ENCODE measurements at regions of chr2 and their contacts with region 1.

Region 1: DNA sequence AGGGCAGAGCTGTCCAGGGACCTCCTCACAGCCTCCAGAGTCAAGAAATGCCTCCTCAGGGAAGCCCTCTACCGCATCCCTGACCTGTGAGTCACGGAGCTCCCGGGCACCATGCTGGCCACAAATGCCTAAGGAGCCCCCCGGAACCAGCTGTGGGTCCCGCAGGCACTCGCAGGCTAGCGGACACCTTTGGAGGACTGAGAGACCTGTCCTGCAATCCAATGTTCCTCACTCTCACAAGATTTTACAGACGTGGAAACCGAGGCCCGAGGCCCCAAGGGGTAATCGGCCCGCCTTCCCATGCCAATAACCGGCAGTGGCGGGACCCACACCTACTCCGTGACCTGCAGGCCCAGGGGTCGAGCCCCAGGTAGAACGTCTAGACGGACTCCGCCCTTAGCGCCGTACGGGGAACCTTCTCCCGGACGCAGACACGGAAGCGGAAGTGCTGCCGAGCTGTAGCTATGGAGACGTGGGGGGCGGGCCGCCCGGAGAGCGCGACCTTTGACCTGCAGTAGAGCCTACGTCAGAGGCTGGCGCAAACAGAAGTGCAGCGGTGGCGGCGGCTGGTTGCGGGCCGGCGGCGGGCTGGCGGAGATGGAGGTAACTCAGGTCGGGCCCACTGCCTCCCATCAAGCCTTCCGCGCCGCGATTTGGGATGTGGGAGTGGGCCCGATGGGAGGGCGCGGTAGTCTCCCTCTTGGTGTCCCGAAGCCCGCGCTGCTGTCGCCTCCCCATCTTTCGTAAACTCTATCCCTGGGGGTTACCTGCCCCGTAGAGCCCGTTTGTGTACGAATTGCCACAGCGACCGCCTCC is at the start of gene GCC2:
- DNase-seq: peak; percentile 97
- H3K4me3 Mint-ChIP-seq: peak within 1 kb of the TSS; percentile 96
- H3K27ac Mint-ChIP-seq: peak within 1 kb of the TSS; percentile 97
- H3K4me1 Mint-ChIP-seq: peaks cover 38% of the 10 kb centered on the region
- H3K27me3 Mint-ChIP-seq: no peaks in the 10 kb centered on the region
- total RNA-seq, gene GCC2: 43.6 to 47.3 TPM

Region 2: GRCh38 chr2:108492364-108492763 is 43.5 kb after region 1 on chr2:
- CTCF ChIA-PET with region 1: no interaction called
- POLR2A ChIA-PET with region 1: interaction called, 3 read pairs
- intact Hi-C with region 1: loop called (anchors 5 kb)
- DNase-seq: no peak
- H3K4me3 Mint-ChIP-seq: no peak overlapping the region
- H3K27ac Mint-ChIP-seq: peak overlapping the region; percentile 68
- H3K4me1 Mint-ChIP-seq: peaks cover 17% of the 10 kb centered on the region
- H3K27me3 Mint-ChIP-seq: no peaks in the 10 kb centered on the region

Region 3: DNA sequence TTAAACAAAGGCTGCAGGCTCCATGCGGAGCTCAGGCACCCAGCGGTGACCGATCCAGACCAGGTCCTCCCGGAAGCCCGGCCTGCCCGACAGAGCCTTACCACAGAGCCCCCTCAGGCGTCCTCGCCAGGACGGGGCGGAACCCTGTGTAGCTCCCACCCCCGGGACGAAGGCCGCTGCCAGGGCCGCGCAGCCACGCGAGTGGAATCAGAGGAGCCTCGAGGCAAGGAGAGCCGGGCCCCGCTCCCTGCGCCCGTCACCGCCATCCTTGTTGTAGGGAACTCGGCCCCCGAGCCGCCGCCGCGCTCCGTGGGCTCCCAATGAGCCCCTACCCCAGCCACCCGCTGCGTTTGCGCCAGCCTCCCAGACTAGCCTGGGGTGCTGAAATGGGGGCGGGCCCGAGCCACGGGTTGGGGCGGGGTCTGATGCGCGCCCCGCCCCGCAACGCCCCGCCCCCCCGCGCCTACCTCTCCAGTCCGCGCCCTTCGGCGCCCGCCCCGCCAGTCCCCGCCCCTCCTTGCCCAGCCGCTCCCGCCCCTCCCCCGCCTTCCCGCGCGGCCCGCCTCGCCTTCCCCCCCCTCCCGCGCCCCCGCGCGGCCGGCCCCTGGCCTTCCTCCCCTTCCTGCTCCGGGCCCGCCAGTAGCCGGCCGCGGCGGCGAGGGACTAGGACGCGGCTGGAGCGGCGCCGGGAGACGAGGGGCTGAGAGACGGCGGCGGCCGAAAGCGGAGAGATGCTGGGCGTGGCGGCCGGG is 85.1 kb after region 1 on chr2 and contains the start of gene LIMS1:
- CTCF ChIA-PET with region 1: no interaction called
- POLR2A ChIA-PET with region 1: interaction called, 19 read pairs
- intact Hi-C with region 1: loop called (anchors 1 kb)
- DNase-seq: peak; percentile 92
- H3K4me3 Mint-ChIP-seq: peak within 1 kb of the TSS; percentile 95
- H3K27ac Mint-ChIP-seq: peak within 1 kb of the TSS; percentile 91
- H3K4me1 Mint-ChIP-seq: peaks cover 37% of the 10 kb centered on the region
- H3K27me3 Mint-ChIP-seq: no peaks in the 10 kb centered on the region
- total RNA-seq, gene LIMS1: 102 to 104 TPM

Region 4: GRCh38 chr2:108719149-108720044 is 270.5 kb after region 1 on chr2 and contains the start of gene RANBP2:
- CTCF ChIA-PET with region 1: no interaction called
- POLR2A ChIA-PET with region 1: no interaction called
- intact Hi-C with region 1: loop called (anchors 2 kb)
- DNase-seq: peak; percentile 96
- H3K4me3 Mint-ChIP-seq: peak within 1 kb of the TSS; percentile 93
- H3K27ac Mint-ChIP-seq: peak within 1 kb of the TSS; percentile 98
- H3K4me1 Mint-ChIP-seq: peaks cover 19% of the 10 kb centered on the region
- H3K27me3 Mint-ChIP-seq: no peaks in the 10 kb centered on the region
- total RNA-seq, gene RANBP2: 72.0 to 75.5 TPM

Region 5: GRCh38 chr2:108786354-108787199 is 337.7 kb after region 1 on chr2 and contains the start of gene CCDC138:
- CTCF ChIA-PET with region 1: no interaction called
- POLR2A ChIA-PET with region 1: no interaction called
- intact Hi-C with region 1: loop called (anchors 2 kb)
- DNase-seq: peak; percentile 94
- H3K4me3 Mint-ChIP-seq: peak within 1 kb of the TSS; percentile 91
- H3K27ac Mint-ChIP-seq: peak within 1 kb of the TSS; percentile 81
- H3K4me1 Mint-ChIP-seq: peaks cover 13% of the 10 kb centered on the region
- H3K27me3 Mint-ChIP-seq: no peaks in the 10 kb centered on the region
- total RNA-seq, gene CCDC138: 9.1 to 9.5 TPM

Measured in activated CD4-positive, alpha-beta memory T cell treated with anti-CD3 and anti-CD28 coated beads for 36 hours (primary cell).